ENCODE measurements at regions of chr1 and their contacts with region 1.

Region 1: GRCh38 chr1:110338886-110339406 is at the start of gene RBM15:
- DNase-seq: peak; percentile 98 to 100 (median 99)
- H3K4me3 ChIP-seq: peak within 1 kb of the TSS; percentile 55 to 89
- H3K4me3 Mint-ChIP-seq: no peak within 1 kb of the TSS
- H3K27ac ChIP-seq: peak within 1 kb of the TSS; percentile 94
- H3K27ac Mint-ChIP-seq: peak within 1 kb of the TSS in 1 of 7 donors; percentile 98
- H3K4me1 ChIP-seq: peaks cover 56% of the 10 kb centered on the region
- H3K4me1 Mint-ChIP-seq: peaks cover 30 to 63% (median 52%) of the 10 kb centered on the region in 4 donors
- H3K27me3 ChIP-seq: no peaks in the 10 kb centered on the region
- H3K27me3 Mint-ChIP-seq: no peaks in the 10 kb centered on the region
- total RNA-seq, gene RBM15: 47.7 to 51.4 TPM

Region 2: GRCh38 chr1:109426278-109427170 is 912.4 kb before region 1 on chr1 and contains the start of gene PSMA5:
- CTCF ChIA-PET with region 1: no interaction called
- POLR2A ChIA-PET with region 1: no interaction called
- intact Hi-C with region 1: loop called (anchors 2 kb)
- DNase-seq: peak; percentile 93 to 99 (median 96)
- H3K4me3 ChIP-seq: peak within 1 kb of the TSS; percentile 96 to 98
- H3K4me3 Mint-ChIP-seq: peak within 1 kb of the TSS; percentile 94 to 99 (median 98)
- H3K27ac ChIP-seq: peak within 1 kb of the TSS; percentile 87
- H3K27ac Mint-ChIP-seq: peak within 1 kb of the TSS; percentile 90 to 99 (median 98)
- H3K4me1 ChIP-seq: peaks cover 44% of the 10 kb centered on the region
- H3K4me1 Mint-ChIP-seq: peaks cover 22 to 50% (median 37%) of the 10 kb centered on the region in 4 donors
- H3K27me3 ChIP-seq: no peaks in the 10 kb centered on the region
- H3K27me3 Mint-ChIP-seq: no peaks in the 10 kb centered on the region
- total RNA-seq, gene PSMA5: 87.7 to 90.2 TPM

Region 3: GRCh38 chr1:110203021-110203661 is 135.8 kb before region 1 on chr1:
- CTCF ChIA-PET with region 1: interaction called, 127 read pairs
- POLR2A ChIA-PET with region 1: interaction called, 169 read pairs
- intact Hi-C with region 1: no loop called
- DNase-seq: peak; percentile 75 to 82 (median 78)
- H3K4me3 ChIP-seq: no peak overlapping the region
- H3K4me3 Mint-ChIP-seq: peak overlapping the region in 3 of 8 donors; percentile 2 to 44 (median 34)
- H3K27ac ChIP-seq: no peak overlapping the region
- H3K27ac Mint-ChIP-seq: peak overlapping the region; percentile 48 to 93 (median 83)
- H3K4me1 ChIP-seq: peaks cover 19% of the 10 kb centered on the region
- H3K4me1 Mint-ChIP-seq: peaks cover 13 to 31% (median 20%) of the 10 kb centered on the region in 4 donors
- H3K27me3 ChIP-seq: no peaks in the 10 kb centered on the region
- H3K27me3 Mint-ChIP-seq: no peaks in the 10 kb centered on the region

Region 4: DNA sequence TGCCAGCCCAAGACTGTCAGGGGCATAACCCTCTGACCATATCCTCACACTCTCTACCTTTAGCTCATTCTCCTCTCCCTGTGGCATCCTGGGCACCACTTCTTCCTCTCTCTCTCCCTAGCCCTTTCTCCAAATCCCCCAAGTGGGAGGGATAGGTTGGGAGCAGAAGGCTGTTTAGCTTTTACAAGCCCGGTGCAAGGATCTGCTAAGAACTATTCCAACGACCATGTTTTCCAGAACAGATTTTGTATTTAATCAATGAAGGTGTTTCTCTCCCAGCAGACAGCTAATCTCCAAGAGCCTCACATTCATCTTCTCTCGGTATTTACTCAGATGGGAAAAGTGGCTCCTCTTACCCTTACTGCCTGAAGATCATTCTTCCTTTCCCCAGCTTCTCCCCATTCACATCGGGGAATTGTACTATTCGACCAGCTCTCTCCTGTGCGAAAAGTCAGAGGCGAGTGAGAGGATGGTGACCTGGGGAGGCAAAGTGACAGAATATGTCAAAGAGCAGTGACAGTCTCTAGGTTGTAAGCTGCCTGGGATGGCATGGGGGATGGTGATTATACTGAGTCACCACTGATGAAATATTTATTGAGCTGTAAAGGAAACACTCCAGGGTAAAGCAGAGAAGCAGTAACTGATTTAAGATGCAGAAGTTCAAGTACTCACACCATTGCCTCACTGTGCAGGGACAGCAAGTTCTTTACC is 46.8 kb before region 1 on chr1:
- CTCF ChIA-PET with region 1: no interaction called
- POLR2A ChIA-PET with region 1: no interaction called
- intact Hi-C with region 1: no loop called
- DNase-seq: no peak
- H3K4me3 ChIP-seq: no peak overlapping the region
- H3K4me3 Mint-ChIP-seq: no peak overlapping the region
- H3K27ac ChIP-seq: no peak overlapping the region
- H3K27ac Mint-ChIP-seq: no peak overlapping the region
- H3K4me1 ChIP-seq: no peaks in the 10 kb centered on the region
- H3K4me1 Mint-ChIP-seq: no peaks in the 10 kb centered on the region
- H3K27me3 ChIP-seq: no peaks in the 10 kb centered on the region
- H3K27me3 Mint-ChIP-seq: no peaks in the 10 kb centered on the region

Region 5: GRCh38 chr1:110384581-110385321 is 45.8 kb after region 1 on chr1:
- CTCF ChIA-PET with region 1: interaction called, 4 read pairs
- POLR2A ChIA-PET with region 1: interaction called, 12 read pairs
- intact Hi-C with region 1: no loop called
- DNase-seq: no peak
- H3K4me3 ChIP-seq: no peak overlapping the region
- H3K4me3 Mint-ChIP-seq: peak overlapping the region in 1 of 8 donors; percentile 70
- H3K27ac ChIP-seq: no peak overlapping the region
- H3K27ac Mint-ChIP-seq: peak overlapping the region in 3 of 7 donors; percentile 9 to 97 (median 70)
- H3K4me1 ChIP-seq: peaks cover 12% of the 10 kb centered on the region
- H3K4me1 Mint-ChIP-seq: peaks cover 12 to 37% (median 21%) of the 10 kb centered on the region in 4 donors
- H3K27me3 ChIP-seq: no peaks in the 10 kb centered on the region
- H3K27me3 Mint-ChIP-seq: no peaks in the 10 kb centered on the region

Region 6: GRCh38 chr1:110460253-110461220 is 121.6 kb after region 1 on chr1:
- CTCF ChIA-PET with region 1: interaction called, 11 read pairs
- POLR2A ChIA-PET with region 1: no interaction called
- intact Hi-C with region 1: loop called (anchors 5 kb)
- DNase-seq: peak; percentile 78 to 84 (median 83)
- H3K4me3 ChIP-seq: no peak overlapping the region
- H3K4me3 Mint-ChIP-seq: no peak overlapping the region
- H3K27ac ChIP-seq: no peak overlapping the region
- H3K27ac Mint-ChIP-seq: no peak overlapping the region
- H3K4me1 ChIP-seq: no peaks in the 10 kb centered on the region
- H3K4me1 Mint-ChIP-seq: no peaks in the 10 kb centered on the region
- H3K27me3 ChIP-seq: no peaks in the 10 kb centered on the region
- H3K27me3 Mint-ChIP-seq: peaks cover 0 to 2% of the 10 kb centered on the region in 2 donors

Region 7: DNA sequence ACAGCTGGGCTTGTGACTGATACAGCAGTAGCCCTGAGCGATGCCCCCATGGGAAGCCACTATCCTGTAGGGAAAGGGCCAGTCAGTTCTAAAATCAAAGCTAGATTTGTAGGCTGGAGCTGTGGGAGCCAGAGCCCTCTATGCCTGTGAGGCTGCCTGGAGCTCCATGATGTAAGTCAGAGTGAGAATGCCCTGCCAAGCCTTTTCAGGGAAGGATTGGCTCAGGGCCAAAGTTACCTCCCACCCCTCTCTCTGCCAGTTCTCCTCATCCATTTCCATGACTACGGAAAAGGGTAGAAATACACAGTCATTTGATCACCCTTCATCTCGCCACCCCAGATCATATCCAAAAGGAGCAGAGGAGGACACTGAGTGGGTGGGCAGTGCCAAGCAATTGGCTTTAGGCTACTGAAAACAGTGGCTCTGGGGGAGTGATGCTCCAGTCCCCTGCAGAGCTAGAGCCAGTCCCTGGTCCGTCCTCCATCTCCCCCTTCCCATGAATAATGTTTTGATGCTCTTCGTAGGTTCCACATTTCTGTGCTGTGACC is 395.3 kb after region 1 on chr1:
- CTCF ChIA-PET with region 1: no interaction called
- POLR2A ChIA-PET with region 1: no interaction called
- intact Hi-C with region 1: no loop called
- DNase-seq: no peak
- H3K4me3 ChIP-seq: no peak overlapping the region
- H3K4me3 Mint-ChIP-seq: no peak overlapping the region
- H3K27ac ChIP-seq: no peak overlapping the region
- H3K27ac Mint-ChIP-seq: no peak overlapping the region
- H3K4me1 ChIP-seq: no peaks in the 10 kb centered on the region
- H3K4me1 Mint-ChIP-seq: no peaks in the 10 kb centered on the region
- H3K27me3 ChIP-seq: no peaks in the 10 kb centered on the region
- H3K27me3 Mint-ChIP-seq: no peaks in the 10 kb centered on the region

Region 8: DNA sequence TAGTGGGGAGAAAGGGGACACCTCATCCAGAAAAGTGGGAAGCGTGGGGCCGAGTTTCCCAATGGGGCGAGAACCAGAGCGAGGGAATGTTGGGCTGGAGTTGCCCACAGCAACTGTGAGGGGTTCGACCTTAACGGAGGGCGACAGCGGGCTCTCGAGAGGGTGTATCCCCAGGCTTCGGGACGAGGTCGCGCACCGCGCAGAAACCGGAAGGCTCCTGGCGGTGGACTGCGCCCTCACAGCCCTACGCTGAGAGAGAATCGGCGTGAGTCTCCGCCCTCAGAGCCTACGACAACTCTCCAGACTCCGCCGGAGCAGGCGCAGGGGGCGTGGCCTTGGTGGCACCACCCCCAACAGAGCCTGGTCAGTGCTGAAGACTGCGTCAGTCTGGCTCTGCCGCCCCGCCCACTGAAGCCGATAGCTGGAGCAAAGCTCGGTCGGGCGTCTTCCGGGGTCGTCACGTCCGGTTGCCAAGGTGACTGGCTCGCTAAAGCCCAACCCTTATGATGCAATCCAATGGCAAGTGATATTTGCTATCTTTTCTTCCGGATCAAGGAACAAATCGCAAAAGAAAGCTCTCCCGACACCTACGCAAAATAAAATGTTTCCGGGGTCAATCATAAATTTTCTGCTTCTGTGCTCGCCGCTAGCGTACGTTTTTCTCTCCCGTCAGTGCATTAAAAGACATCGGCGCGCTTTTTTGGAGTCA is 624.9 kb after region 1 on chr1 and contains the start of gene LRIF1:
- CTCF ChIA-PET with region 1: no interaction called
- POLR2A ChIA-PET with region 1: interaction called, 11 read pairs
- intact Hi-C with region 1: loop called (anchors 5 kb)
- DNase-seq: peak; percentile 98 to 100 (median 100)
- H3K4me3 ChIP-seq: peak within 1 kb of the TSS; percentile 90 to 95
- H3K4me3 Mint-ChIP-seq: peak within 1 kb of the TSS; percentile 81 to 96 (median 92)
- H3K27ac ChIP-seq: peak within 1 kb of the TSS; percentile 96
- H3K27ac Mint-ChIP-seq: peak within 1 kb of the TSS; percentile 93 to 100 (median 98)
- H3K4me1 ChIP-seq: peaks cover 31% of the 10 kb centered on the region
- H3K4me1 Mint-ChIP-seq: peaks cover 20 to 35% (median 27%) of the 10 kb centered on the region in 4 donors
- H3K27me3 ChIP-seq: peaks cover 3% of the 10 kb centered on the region
- H3K27me3 Mint-ChIP-seq: peaks cover 8 to 10% of the 10 kb centered on the region in 2 donors
- total RNA-seq, gene LRIF1: 27.0 to 28.2 TPM

Region 9: GRCh38 chr1:111755331-111756123 is 1416.6 kb after region 1 on chr1 and contains the start of gene DDX20:
- CTCF ChIA-PET with region 1: no interaction called
- POLR2A ChIA-PET with region 1: no interaction called
- intact Hi-C with region 1: loop called (anchors 2 kb)
- DNase-seq: peak; percentile 94 to 96 (median 95)
- H3K4me3 ChIP-seq: peak within 1 kb of the TSS; percentile 63 to 92
- H3K4me3 Mint-ChIP-seq: peak within 1 kb of the TSS; percentile 90 to 100 (median 98)
- H3K27ac ChIP-seq: peak within 1 kb of the TSS; percentile 93
- H3K27ac Mint-ChIP-seq: peak within 1 kb of the TSS; percentile 97 to 100 (median 99)
- H3K4me1 ChIP-seq: peaks cover 20% of the 10 kb centered on the region
- H3K4me1 Mint-ChIP-seq: peaks cover 26 to 36% (median 33%) of the 10 kb centered on the region in 4 donors
- H3K27me3 ChIP-seq: no peaks in the 10 kb centered on the region
- H3K27me3 Mint-ChIP-seq: peaks cover 0 to 2% of the 10 kb centered on the region in 2 donors
- total RNA-seq, gene DDX20: 22.2 to 26.0 TPM

Measured in CD4-positive, alpha-beta memory T cell (primary cell).